Naive thymus-derived CD4-positive, alpha-beta T cell (primary cell): ENCODE measurements at regions of chr21 and their contacts with region 1.

Region 1: DNA sequence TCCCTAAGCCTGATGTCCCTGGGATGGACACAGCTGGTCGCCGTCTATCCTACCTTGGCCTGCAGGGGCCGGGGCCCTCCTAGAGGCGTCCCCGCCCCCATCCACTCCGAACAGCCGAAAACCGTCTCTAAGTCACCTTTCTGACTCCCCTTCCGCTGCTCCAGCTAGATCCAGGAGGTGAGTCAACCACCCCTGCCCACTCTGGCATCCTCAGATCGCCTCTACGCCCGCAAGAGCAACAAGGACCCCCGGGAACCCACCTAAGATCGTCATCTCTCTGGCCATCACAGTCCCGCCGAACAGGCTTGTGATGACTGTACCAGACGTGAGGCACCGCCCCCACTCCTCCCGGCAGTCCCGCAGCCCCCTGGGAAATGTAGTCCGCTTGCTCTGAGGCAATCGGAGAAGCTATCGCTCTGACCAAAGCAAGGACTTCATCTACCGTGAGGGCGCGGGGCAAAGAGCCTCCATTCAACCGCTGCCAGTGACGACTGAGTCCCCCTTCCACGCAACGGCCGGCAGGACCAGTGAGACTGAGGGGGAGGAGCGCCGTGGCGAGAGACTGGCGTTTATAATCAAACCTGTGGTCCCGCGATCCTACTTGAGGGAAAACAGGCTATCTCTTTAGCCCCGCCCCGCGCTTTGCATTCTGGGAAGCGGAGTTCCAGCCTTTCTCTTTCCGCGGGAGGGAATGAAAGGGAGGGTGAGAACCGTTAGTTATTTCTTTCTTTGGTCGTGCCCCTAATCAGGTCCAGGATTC is at the start of gene HSPA13:
- DNase-seq: peak; percentile 88 to 99 (median 99)
- ATAC-seq: peak; percentile 97
- H3K4me3 ChIP-seq: peak within 1 kb of the TSS; percentile 93
- H3K4me3 Mint-ChIP-seq: peak within 1 kb of the TSS; percentile 93 to 100 (median 100)
- H3K27ac ChIP-seq: peak within 1 kb of the TSS; percentile 91
- H3K27ac Mint-ChIP-seq: peak within 1 kb of the TSS; percentile 93 to 100 (median 98)
- H3K4me1 ChIP-seq: peaks cover 8 to 25% of the 10 kb centered on the region in 2 donors
- H3K4me1 Mint-ChIP-seq: peaks cover 13 to 44% (median 41%) of the 10 kb centered on the region in 7 donors
- H3K27me3 ChIP-seq: no peaks in the 10 kb centered on the region
- H3K27me3 Mint-ChIP-seq: peaks cover 0 to 2% (median 0%) of the 10 kb centered on the region in 5 donors
- total RNA-seq, gene HSPA13: 16.9 to 38.1 (median 26.7) TPM

Region 2: GRCh38 chr21:14215971-14216641 is 166.9 kb before region 1 on chr21 and contains the start of gene RBM11:
- CTCF ChIA-PET with region 1: no interaction called
- POLR2A ChIA-PET with region 1: no interaction called
- intact Hi-C with region 1: loop called in 1 of 2 experiments (anchors 1 kb)
- DNase-seq: peak; percentile 69 to 88 (median 82)
- ATAC-seq: peak; percentile 99
- H3K4me3 ChIP-seq: peak within 1 kb of the TSS; percentile 80
- H3K4me3 Mint-ChIP-seq: peak within 1 kb of the TSS; percentile 86 to 93 (median 90)
- H3K27ac ChIP-seq: peak within 1 kb of the TSS; percentile 77
- H3K27ac Mint-ChIP-seq: peak within 1 kb of the TSS in 8 of 9 donors; percentile 61 to 88 (median 82)
- H3K4me1 ChIP-seq: peaks cover 0 to 8% of the 10 kb centered on the region in 2 donors
- H3K4me1 Mint-ChIP-seq: peaks cover 0 to 10% (median 8%) of the 10 kb centered on the region in 7 donors
- H3K27me3 ChIP-seq: no peaks in the 10 kb centered on the region
- H3K27me3 Mint-ChIP-seq: peaks cover 4 to 26% (median 8%) of the 10 kb centered on the region in 5 donors
- total RNA-seq, gene RBM11: 0.46 to 19.3 (median 4.9) TPM

Region 3: DNA sequence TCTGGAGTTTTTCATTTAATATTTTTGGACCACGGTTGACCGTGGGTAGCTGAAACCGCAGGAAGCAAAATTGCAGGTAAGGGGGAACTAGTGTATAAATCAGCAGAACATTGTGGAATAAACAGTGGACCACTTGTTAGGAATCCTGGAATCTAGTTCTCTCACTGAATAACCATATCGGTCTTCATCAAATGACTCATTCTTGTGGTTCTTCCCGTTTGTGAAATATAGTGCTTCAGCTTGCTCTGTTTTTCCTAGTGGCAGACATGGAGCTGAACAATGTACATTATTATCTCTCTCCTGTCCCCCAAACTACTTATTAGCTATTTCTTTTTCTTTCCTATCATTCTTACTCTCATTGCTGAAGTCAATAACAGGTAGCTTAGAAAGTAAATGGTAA is 62.0 kb before region 1 on chr21:
- CTCF ChIA-PET with region 1: no interaction called
- POLR2A ChIA-PET with region 1: no interaction called
- intact Hi-C with region 1: no loop called
- DNase-seq: no peak
- ATAC-seq: no peak
- H3K4me3 ChIP-seq: no peak overlapping the region
- H3K4me3 Mint-ChIP-seq: no peak overlapping the region
- H3K27ac ChIP-seq: no peak overlapping the region
- H3K27ac Mint-ChIP-seq: no peak overlapping the region
- H3K4me1 ChIP-seq: no peaks in the 10 kb centered on the region
- H3K4me1 Mint-ChIP-seq: no peaks in the 10 kb centered on the region
- H3K27me3 ChIP-seq: peaks cover 0 to 4% of the 10 kb centered on the region in 2 donors
- H3K27me3 Mint-ChIP-seq: peaks cover 4 to 39% (median 16%) of the 10 kb centered on the region in 5 donors

Region 4: DNA sequence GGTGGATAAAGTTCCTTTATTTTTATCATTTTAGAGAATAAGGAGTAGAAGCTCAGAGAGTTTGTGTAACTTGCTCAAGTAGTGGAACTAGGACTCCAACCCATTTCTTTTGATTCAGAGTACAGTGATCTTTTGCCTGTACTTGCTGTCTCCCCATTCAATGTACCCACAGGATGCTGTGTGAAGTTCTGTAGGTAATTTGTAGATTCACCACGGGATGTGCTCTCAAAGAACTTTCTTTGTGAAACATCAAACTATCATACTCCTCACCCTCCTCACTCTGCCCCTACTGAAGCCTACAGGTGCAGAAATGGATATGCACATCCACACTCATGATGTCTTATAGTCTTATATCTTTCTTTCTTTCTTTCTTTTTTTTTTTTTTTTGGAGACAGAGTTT is 65.8 kb after region 1 on chr21:
- CTCF ChIA-PET with region 1: no interaction called
- POLR2A ChIA-PET with region 1: no interaction called
- intact Hi-C with region 1: no loop called
- DNase-seq: peak in 4 of 9 donors; percentile 2 to 15 (median 5)
- ATAC-seq: no peak
- H3K4me3 ChIP-seq: no peak overlapping the region
- H3K4me3 Mint-ChIP-seq: no peak overlapping the region
- H3K27ac ChIP-seq: no peak overlapping the region
- H3K27ac Mint-ChIP-seq: peak overlapping the region in 1 of 9 donors; percentile 23
- H3K4me1 ChIP-seq: peaks cover 0 to 4% of the 10 kb centered on the region in 2 donors
- H3K4me1 Mint-ChIP-seq: peaks cover 0 to 46% (median 0%) of the 10 kb centered on the region in 7 donors
- H3K27me3 ChIP-seq: no peaks in the 10 kb centered on the region
- H3K27me3 Mint-ChIP-seq: no peaks in the 10 kb centered on the region

Region 5: GRCh38 chr21:14533504-14534428 is 150.8 kb after region 1 on chr21:
- CTCF ChIA-PET with region 1: no interaction called
- POLR2A ChIA-PET with region 1: no interaction called
- intact Hi-C with region 1: loop called in 1 of 2 experiments (anchors 5 kb)
- DNase-seq: peak in 3 of 9 donors; percentile 15 to 49 (median 22)
- ATAC-seq: peak; percentile 88
- H3K4me3 ChIP-seq: peak overlapping the region; percentile 22
- H3K4me3 Mint-ChIP-seq: peak overlapping the region in 8 of 10 donors; percentile 3 to 85 (median 47)
- H3K27ac ChIP-seq: no peak overlapping the region
- H3K27ac Mint-ChIP-seq: peak overlapping the region in 8 of 9 donors; percentile 25 to 95 (median 82)
- H3K4me1 ChIP-seq: peaks cover 10 to 30% of the 10 kb centered on the region in 2 donors
- H3K4me1 Mint-ChIP-seq: peaks cover 37 to 81% (median 67%) of the 10 kb centered on the region in 7 donors
- H3K27me3 ChIP-seq: no peaks in the 10 kb centered on the region
- H3K27me3 Mint-ChIP-seq: no peaks in the 10 kb centered on the region

Region 6: GRCh38 chr21:14737922-14738321 is 354.9 kb after region 1 on chr21:
- CTCF ChIA-PET with region 1: interaction called, 3 read pairs
- POLR2A ChIA-PET with region 1: no interaction called
- intact Hi-C with region 1: loop called in 1 of 2 experiments (anchors 5 kb)
- DNase-seq: peak in 7 of 9 donors; percentile 54 to 80 (median 72)
- ATAC-seq: peak; percentile 94
- H3K4me3 ChIP-seq: no peak overlapping the region
- H3K4me3 Mint-ChIP-seq: peak overlapping the region in 1 of 10 donors; percentile 23
- H3K27ac ChIP-seq: no peak overlapping the region
- H3K27ac Mint-ChIP-seq: peak overlapping the region in 1 of 9 donors; percentile 7
- H3K4me1 ChIP-seq: peaks cover 0 to 6% of the 10 kb centered on the region in 2 donors
- H3K4me1 Mint-ChIP-seq: peaks cover 0 to 43% (median 8%) of the 10 kb centered on the region in 7 donors
- H3K27me3 ChIP-seq: no peaks in the 10 kb centered on the region
- H3K27me3 Mint-ChIP-seq: peaks cover 0 to 5% (median 3%) of the 10 kb centered on the region in 5 donors

Region 7: DNA sequence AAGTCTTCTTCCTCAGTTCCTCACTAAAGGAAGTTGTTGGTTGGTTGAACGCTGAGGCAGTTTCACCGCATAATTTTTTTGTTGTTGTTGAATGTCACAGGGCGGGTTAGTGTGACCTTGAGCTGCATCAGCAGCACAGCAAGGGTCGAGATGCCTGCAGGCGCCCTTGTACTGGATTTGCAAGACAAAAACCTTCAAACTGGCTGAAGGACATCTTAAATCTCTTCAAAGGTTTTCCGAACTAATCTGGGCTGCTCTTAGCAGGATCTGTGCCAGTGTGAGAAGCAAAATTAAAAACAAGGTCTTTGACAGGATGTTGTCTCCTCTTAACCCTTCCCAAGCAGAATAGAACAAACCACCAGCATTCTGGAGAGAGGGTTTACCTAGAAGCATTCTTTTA is 622.4 kb after region 1 on chr21:
- CTCF ChIA-PET with region 1: no interaction called
- POLR2A ChIA-PET with region 1: no interaction called
- intact Hi-C with region 1: loop called in 1 of 2 experiments (anchors 5 kb)
- DNase-seq: peak in 8 of 9 donors; percentile 12 to 62 (median 53)
- ATAC-seq: peak; percentile 81
- H3K4me3 ChIP-seq: peak overlapping the region; percentile 56
- H3K4me3 Mint-ChIP-seq: peak overlapping the region; percentile 64 to 88 (median 80)
- H3K27ac ChIP-seq: peak overlapping the region; percentile 24
- H3K27ac Mint-ChIP-seq: peak overlapping the region; percentile 66 to 93 (median 80)
- H3K4me1 ChIP-seq: peaks cover 0 to 28% of the 10 kb centered on the region in 2 donors
- H3K4me1 Mint-ChIP-seq: peaks cover 36 to 67% (median 60%) of the 10 kb centered on the region in 7 donors
- H3K27me3 ChIP-seq: no peaks in the 10 kb centered on the region
- H3K27me3 Mint-ChIP-seq: no peaks in the 10 kb centered on the region

Region 8: GRCh38 chr21:15729674-15730483 is 1346.9 kb after region 1 on chr21 and contains the start of gene USP25:
- CTCF ChIA-PET with region 1: no interaction called
- POLR2A ChIA-PET with region 1: interaction called, 3 read pairs
- intact Hi-C with region 1: loop called (anchors 1 kb)
- DNase-seq: peak; percentile 76 to 85 (median 82)
- ATAC-seq: peak; percentile 93
- H3K4me3 ChIP-seq: peak within 1 kb of the TSS; percentile 58
- H3K4me3 Mint-ChIP-seq: peak within 1 kb of the TSS; percentile 92 to 98 (median 97)
- H3K27ac ChIP-seq: peak within 1 kb of the TSS; percentile 83
- H3K27ac Mint-ChIP-seq: peak within 1 kb of the TSS; percentile 85 to 97 (median 94)
- H3K4me1 ChIP-seq: peaks cover 19 to 27% of the 10 kb centered on the region in 2 donors
- H3K4me1 Mint-ChIP-seq: peaks cover 9 to 45% (median 33%) of the 10 kb centered on the region in 7 donors
- H3K27me3 ChIP-seq: no peaks in the 10 kb centered on the region
- H3K27me3 Mint-ChIP-seq: peaks cover 0 to 33% (median 0%) of the 10 kb centered on the region in 5 donors
- total RNA-seq, gene USP25: 51.0 to 67.4 (median 56.5) TPM